ENCODE measurements at regions of chr17 and their contacts with region 1.

Region 1: DNA sequence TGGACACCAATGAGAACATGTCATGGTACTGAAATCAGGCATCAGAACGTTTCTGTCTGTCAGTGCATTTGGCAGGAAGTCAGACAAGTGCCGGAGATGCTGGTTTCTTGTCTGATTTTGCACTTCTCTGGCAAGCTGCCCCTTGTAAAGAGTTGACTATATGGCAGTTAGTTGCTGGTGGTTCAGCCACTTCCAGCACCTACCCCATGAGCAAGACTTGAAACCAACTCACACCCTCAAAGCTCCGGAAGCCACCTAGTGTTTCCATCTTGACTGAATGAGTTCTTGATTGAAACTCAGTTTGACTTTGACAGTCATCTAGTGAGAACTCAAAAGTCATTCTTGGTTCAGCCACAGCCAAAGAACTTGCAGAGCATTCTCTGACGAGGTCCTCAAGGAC is 225.1 kb downstream of the SPECC1 start:
- DNase-seq: peak; percentile 85
- ATAC-seq: peak; percentile 99
- H3K4me3 Mint-ChIP-seq: peak overlapping the region; percentile 20
- H3K27ac Mint-ChIP-seq: peak overlapping the region; percentile 91
- H3K4me1 Mint-ChIP-seq: peaks cover 41% of the 10 kb centered on the region
- H3K27me3 Mint-ChIP-seq: no peaks in the 10 kb centered on the region

Region 2: DNA sequence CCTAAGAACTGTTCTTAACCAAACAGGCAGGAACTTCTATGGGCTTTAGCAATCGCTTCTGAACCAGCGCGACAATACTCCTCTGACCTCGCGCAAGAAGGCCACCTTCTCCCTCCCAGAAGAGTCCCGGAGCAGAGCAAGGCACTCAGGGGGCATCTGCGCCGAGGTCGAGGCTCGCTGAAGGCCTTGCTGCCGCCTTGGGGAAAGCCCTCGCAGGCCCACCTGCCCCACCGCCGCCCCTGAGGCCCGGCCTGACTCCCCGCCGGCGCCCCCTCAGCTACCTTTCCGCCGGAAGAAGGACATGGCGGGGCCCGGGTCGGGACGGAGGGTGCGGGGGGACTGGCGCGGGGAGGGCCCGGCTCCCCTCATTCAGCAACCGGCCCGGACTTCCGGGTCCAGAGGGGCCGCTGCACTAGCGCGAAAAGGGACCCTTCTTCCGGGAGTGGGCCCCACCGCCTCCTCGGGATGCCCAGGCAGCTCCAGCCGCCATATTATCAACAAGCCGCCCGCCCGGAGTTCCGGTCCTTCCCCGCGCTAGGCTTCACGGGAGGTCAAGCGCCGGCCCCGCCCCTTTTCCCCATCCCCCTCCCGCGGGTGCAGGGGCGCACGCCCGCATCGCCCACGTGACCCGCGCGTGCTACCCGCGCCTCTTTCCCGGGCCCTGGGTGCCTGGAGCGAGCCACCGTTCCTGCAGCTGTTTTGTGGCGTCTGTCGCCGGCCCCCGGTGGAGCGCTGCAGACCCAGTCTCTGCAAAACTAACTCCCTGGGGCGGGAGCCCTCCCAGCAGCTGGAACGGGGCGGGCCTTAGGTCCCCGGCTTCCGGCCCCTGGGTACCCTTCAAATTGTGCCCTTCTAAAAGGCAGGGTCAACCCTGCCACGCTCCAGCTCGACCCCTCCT is 256.7 kb before region 1 on chr17 and contains the start of gene AKAP10:
- CTCF ChIA-PET with region 1: no interaction called
- POLR2A ChIA-PET with region 1: no interaction called
- intact Hi-C with region 1: no loop called
- DNase-seq: peak; percentile 98
- ATAC-seq: peak; percentile 85
- H3K4me3 Mint-ChIP-seq: peak within 1 kb of the TSS; percentile 90
- H3K27ac Mint-ChIP-seq: peak within 1 kb of the TSS; percentile 98
- H3K4me1 Mint-ChIP-seq: peaks cover 48% of the 10 kb centered on the region
- H3K27me3 Mint-ChIP-seq: no peaks in the 10 kb centered on the region
- total RNA-seq, gene AKAP10: 31.6 to 35.9 TPM

Region 3: DNA sequence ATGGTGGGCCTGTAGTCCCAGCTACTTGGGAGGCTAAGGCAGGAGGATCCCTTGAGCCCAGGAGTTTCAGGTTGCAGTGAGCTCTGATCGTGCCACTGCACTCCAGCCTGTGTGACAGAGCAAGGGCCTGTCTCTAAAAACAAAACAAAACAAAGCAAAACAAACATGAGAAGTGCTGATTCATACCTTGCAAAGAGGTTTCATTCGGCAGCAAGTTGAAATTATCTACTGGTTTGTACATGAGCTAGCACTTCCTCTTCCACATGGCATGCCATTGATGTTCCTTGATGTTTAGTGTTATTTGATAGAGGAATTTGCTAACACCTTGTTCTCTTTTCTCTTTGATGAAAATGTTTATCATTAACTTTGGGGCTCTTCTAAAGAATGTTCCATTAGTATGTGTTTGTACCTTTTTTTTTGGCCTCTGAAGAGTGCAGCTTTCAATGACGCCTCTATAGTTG is 174.5 kb before region 1 on chr17:
- CTCF ChIA-PET with region 1: no interaction called
- POLR2A ChIA-PET with region 1: no interaction called
- intact Hi-C with region 1: no loop called
- DNase-seq: no peak
- ATAC-seq: no peak
- H3K4me3 Mint-ChIP-seq: no peak overlapping the region
- H3K27ac Mint-ChIP-seq: no peak overlapping the region
- H3K4me1 Mint-ChIP-seq: peaks cover 12% of the 10 kb centered on the region
- H3K27me3 Mint-ChIP-seq: no peaks in the 10 kb centered on the region

Region 4: DNA sequence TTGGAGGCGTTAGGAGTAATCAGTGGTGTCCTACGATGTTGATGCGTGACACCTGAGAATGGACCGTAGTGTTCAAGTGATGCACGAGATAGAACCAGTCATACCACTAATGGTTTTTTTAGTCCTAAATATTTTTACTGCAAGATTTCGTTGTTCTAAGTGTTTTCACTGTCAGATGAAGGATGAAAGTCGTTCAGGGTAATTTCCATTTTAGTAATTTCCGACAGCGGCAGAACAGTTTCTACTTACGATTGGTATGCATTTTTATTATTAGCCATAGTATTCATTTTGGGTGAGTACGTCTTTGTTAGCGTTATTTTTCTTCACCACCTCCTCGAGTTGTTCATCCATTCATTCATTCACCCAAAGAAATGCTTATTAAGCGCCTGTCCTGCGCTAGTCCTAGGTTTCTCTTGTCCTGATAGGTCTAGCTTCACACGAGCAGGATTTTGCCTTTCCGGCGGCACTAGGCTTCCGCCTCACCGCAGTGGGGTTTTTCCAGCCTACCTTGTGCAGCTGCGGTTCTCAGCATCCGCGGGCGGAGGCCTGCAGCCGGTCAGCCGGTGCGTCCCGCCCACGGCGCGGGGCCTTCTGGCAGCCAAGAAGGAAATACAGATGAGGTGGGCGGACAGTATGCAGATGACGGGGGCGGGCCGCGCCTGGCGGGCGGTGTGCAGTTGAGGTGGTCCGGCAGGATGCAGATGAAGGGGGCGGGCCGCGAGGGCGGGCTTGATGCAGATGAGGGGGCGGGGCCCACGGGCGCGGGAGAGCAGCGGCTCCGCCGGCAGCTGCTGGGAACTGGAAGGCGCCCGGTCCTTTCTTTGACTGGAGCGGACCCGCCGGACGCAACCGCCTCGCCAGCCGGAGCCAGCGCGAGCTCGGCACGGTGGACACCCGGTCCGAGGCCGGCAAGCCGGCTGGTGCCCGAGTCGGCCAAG is 78.7 kb before region 1 on chr17:
- CTCF ChIA-PET with region 1: interaction called, 3 read pairs
- POLR2A ChIA-PET with region 1: no interaction called
- intact Hi-C with region 1: loop called in 1 of 2 experiments (anchors 1 kb)
- DNase-seq: peak; percentile 96
- ATAC-seq: peak; percentile 88
- H3K4me3 Mint-ChIP-seq: no peak overlapping the region
- H3K27ac Mint-ChIP-seq: no peak overlapping the region
- H3K4me1 Mint-ChIP-seq: peaks cover 4% of the 10 kb centered on the region
- H3K27me3 Mint-ChIP-seq: peaks cover 5% of the 10 kb centered on the region

Region 5: DNA sequence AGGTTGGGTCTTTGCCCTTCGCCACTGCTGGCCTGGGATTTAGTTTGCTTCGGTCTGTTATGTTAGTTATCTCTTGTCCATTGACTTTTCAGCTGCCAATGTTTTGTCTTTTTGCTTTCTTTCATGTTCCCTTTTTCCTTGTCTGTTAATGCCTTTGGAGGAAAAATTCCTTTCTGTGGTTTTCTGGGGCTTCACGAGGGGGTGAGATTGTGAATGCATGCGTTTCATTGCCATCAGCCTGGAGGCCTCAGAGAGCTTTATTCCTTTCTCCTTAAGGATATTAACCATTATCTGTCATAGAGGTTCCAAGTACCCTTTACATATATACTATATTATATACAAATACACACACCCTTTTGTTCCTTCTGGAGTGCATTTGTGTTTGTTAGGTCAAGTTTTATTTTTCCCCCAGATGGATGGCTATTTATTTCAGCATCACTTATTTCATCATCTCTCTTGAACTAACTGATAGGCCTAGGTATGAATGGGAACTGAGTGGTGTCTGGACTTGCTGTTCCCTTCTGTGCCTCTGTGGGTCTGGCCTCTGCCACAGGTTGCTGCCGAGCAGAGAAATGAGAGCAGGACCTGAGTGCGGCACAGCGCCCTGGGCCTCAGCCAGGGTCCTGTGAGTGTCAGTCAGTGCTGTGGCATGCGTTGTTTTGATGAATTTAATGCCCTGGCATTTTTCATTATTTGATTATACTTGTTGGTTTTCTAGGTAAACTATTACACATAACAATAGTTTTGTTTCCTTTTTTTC is 39.6 kb after region 1 on chr17:
- CTCF ChIA-PET with region 1: interaction called, 4 read pairs
- POLR2A ChIA-PET with region 1: no interaction called
- intact Hi-C with region 1: loop called in 1 of 2 experiments (anchors 5 kb)
- DNase-seq: peak; percentile 45
- ATAC-seq: peak; percentile 51
- H3K4me3 Mint-ChIP-seq: peak overlapping the region; percentile 6
- H3K27ac Mint-ChIP-seq: peak overlapping the region; percentile 84
- H3K4me1 Mint-ChIP-seq: peaks cover 91% of the 10 kb centered on the region
- H3K27me3 Mint-ChIP-seq: no peaks in the 10 kb centered on the region

Region 6: GRCh38 chr17:20281860-20282259 is 47.6 kb after region 1 on chr17:
- CTCF ChIA-PET with region 1: interaction called, 4 read pairs
- POLR2A ChIA-PET with region 1: no interaction called
- intact Hi-C with region 1: loop called (anchors 2 kb)
- DNase-seq: peak; percentile 35
- ATAC-seq: no peak
- H3K4me3 Mint-ChIP-seq: no peak overlapping the region
- H3K27ac Mint-ChIP-seq: no peak overlapping the region
- H3K4me1 Mint-ChIP-seq: peaks cover 53% of the 10 kb centered on the region
- H3K27me3 Mint-ChIP-seq: no peaks in the 10 kb centered on the region

Region 7: GRCh38 chr17:20315821-20316220 is 81.5 kb after region 1 on chr17:
- CTCF ChIA-PET with region 1: interaction called, 10 read pairs
- POLR2A ChIA-PET with region 1: no interaction called
- intact Hi-C with region 1: no loop called
- DNase-seq: no peak
- ATAC-seq: no peak
- H3K4me3 Mint-ChIP-seq: no peak overlapping the region
- H3K27ac Mint-ChIP-seq: no peak overlapping the region
- H3K4me1 Mint-ChIP-seq: peaks cover 2% of the 10 kb centered on the region
- H3K27me3 Mint-ChIP-seq: peaks cover 2% of the 10 kb centered on the region